ENCODE measurements at regions of chr7 and their contacts with region 1.

Region 1: GRCh38 chr7:97117372-97118188 is at the start of gene SDHAF3:
- DNase-seq: peak; percentile 96
- ATAC-seq: peak; percentile 87
- H3K4me3 Mint-ChIP-seq: peak within 1 kb of the TSS; percentile 95
- H3K27ac Mint-ChIP-seq: peak within 1 kb of the TSS; percentile 96
- H3K4me1 Mint-ChIP-seq: peaks cover 41% of the 10 kb centered on the region
- H3K27me3 Mint-ChIP-seq: no peaks in the 10 kb centered on the region
- CTCF ChIP-seq: no peak
- total RNA-seq, gene SDHAF3: 20.6 and 24.2 TPM in 2 replicates

Region 2: DNA sequence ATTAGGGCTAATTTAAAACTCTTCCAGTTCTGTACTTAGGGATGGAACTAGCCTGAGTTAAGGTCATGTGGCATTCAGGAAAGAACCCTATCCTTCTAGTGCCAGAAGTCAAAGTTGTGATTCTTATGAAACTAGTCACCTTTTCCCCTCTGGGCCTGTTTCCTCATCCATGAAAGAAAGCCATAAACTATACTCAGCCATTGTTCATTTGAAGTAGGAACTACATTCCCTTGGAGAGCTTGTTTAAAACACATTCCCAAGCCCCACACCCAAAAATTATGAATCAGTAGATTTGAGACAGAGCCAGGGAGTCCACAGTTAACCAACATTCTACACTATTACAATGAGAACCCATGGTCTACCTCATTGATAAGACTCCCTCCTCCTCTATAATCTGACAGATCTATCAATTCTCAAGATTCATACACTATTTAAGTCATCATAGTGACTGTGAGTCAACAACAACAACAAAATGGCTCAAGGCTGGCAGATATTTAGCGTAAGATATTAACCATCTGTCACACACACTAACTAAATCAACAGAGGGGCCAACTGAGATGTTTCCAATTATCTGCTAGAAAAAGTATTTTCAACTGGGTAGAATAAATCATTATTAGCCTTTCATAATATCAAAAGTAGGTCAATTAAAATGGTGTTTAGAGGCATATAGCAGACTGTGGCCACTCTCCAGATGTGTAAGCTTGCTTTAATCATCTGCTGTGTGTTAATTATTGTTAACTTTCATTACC is 898.0 kb before region 1 on chr7:
- CTCF ChIA-PET with region 1: no interaction called
- POLR2A ChIA-PET with region 1: no interaction called
- intact Hi-C with region 1: no loop called
- DNase-seq: no peak
- ATAC-seq: no peak
- H3K4me3 Mint-ChIP-seq: no peak overlapping the region
- H3K27ac Mint-ChIP-seq: no peak overlapping the region
- H3K4me1 Mint-ChIP-seq: no peaks in the 10 kb centered on the region
- H3K27me3 Mint-ChIP-seq: no peaks in the 10 kb centered on the region
- CTCF ChIP-seq: no peak

Region 3: DNA sequence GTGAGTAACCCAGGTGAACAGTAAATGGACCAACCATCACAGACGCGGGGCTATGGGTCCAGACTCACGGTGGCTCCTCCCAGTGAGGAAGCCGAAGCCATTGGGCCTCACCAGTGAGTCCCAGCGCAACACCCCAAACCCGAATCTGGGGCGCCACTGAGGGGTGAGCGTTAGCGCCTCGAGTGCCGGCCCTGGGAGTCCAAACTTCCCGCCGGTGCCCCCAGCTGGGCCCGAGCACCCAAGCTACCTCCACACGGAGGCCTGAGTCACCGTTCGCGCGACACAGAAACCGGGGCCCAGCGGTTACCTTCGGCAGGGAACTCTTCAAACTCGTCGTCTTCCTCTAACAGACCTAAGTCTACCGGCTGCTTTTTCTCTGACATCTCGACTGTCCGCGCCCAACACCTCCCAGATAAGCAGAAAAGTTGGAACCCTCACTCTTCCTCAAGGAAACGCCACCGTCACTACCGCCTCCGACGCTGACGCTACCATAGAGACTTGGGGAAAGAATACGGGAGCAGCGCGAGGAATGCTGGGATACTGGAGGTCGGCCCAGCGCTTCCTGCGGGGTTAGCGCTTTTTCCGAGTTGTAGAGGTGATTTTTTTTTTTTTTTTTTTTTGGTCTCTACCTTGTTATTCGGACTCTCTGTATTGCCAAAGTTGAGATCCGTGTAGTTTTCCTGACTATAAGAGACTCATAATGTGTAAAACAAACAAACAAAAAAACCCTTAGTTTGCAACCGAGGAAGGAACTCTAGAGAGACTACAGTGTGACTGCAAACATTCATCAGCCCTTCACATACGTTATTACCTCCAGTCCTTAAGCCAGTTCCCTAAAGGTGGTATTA is 408.0 kb before region 1 on chr7 and contains the start of gene SEM1:
- CTCF ChIA-PET with region 1: no interaction called
- POLR2A ChIA-PET with region 1: interaction called, 3 read pairs
- intact Hi-C with region 1: loop called (anchors 1 kb)
- DNase-seq: peak; percentile 53
- ATAC-seq: peak; percentile 89
- H3K4me3 Mint-ChIP-seq: peak within 1 kb of the TSS; percentile 100
- H3K27ac Mint-ChIP-seq: peak within 1 kb of the TSS; percentile 98
- H3K4me1 Mint-ChIP-seq: peaks cover 40% of the 10 kb centered on the region
- H3K27me3 Mint-ChIP-seq: peaks cover 3% of the 10 kb centered on the region
- CTCF ChIP-seq: no peak
- total RNA-seq, gene SEM1: 32.3 and 35.5 TPM in 2 replicates

Region 4: DNA sequence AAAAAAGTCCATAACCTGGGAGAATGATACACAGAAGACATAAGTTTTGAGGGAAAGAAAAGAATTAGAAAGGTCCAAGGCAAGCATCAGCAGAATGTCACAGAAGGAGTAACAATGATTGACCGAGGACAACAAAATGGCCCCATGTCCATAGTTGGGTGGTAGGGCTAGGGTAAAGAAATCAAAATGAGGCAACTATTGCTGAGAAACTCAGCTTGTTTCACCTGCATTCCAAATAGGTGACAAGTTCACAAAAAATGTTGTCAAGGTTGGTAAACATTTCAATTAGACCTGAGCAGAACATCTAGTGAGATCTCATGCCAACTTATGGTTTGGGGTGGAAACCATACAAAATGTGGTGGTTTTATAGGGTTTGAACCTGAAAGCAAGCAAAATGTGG is 135.0 kb before region 1 on chr7:
- CTCF ChIA-PET with region 1: no interaction called
- POLR2A ChIA-PET with region 1: no interaction called
- intact Hi-C with region 1: no loop called
- DNase-seq: no peak
- ATAC-seq: no peak
- H3K4me3 Mint-ChIP-seq: no peak overlapping the region
- H3K27ac Mint-ChIP-seq: no peak overlapping the region
- H3K4me1 Mint-ChIP-seq: no peaks in the 10 kb centered on the region
- H3K27me3 Mint-ChIP-seq: peaks cover 21% of the 10 kb centered on the region
- CTCF ChIP-seq: no peak

Region 5: DNA sequence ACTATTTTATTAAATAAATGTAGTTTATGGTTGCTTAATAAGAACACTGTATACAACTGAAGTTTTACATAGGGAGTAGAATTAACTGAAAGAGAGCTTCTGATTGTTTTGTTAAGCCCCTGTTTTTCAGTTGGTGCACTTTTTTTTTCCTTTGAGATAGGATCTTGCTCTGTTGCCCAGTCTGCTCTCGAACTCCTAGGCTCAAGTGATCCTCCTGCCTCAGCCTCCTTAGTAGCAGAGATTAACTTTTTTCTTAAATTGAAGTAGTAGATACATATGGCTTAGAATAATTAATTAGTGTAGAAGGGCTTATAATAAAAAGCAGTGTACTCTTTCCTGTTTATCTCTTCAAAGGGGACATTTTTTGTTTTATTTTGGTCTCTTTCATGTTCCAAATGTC is 11.2 kb after region 1 on chr7:
- CTCF ChIA-PET with region 1: no interaction called
- POLR2A ChIA-PET with region 1: no interaction called
- intact Hi-C with region 1: no loop called
- DNase-seq: no peak
- ATAC-seq: no peak
- H3K4me3 Mint-ChIP-seq: no peak overlapping the region
- H3K27ac Mint-ChIP-seq: no peak overlapping the region
- H3K4me1 Mint-ChIP-seq: peaks cover 16% of the 10 kb centered on the region
- H3K27me3 Mint-ChIP-seq: no peaks in the 10 kb centered on the region
- CTCF ChIP-seq: no peak

Region 6: GRCh38 chr7:97179454-97180104 is 62.0 kb after region 1 on chr7:
- CTCF ChIA-PET with region 1: interaction called, 4 read pairs
- POLR2A ChIA-PET with region 1: interaction called, 4 read pairs
- intact Hi-C with region 1: loop called (anchors 1 kb)
- DNase-seq: no peak
- ATAC-seq: peak; percentile 79
- H3K4me3 Mint-ChIP-seq: no peak overlapping the region
- H3K27ac Mint-ChIP-seq: no peak overlapping the region
- H3K4me1 Mint-ChIP-seq: peaks cover 6% of the 10 kb centered on the region
- H3K27me3 Mint-ChIP-seq: no peaks in the 10 kb centered on the region
- CTCF ChIP-seq: peak; percentile 63

Region 7: GRCh38 chr7:97971990-97972943 is 854.7 kb after region 1 on chr7:
- CTCF ChIA-PET with region 1: no interaction called
- POLR2A ChIA-PET with region 1: interaction called, 4 read pairs
- intact Hi-C with region 1: loop called (anchors 1 kb)
- DNase-seq: peak; percentile 75
- ATAC-seq: peak; percentile 92
- H3K4me3 Mint-ChIP-seq: peak overlapping the region; percentile 92
- H3K27ac Mint-ChIP-seq: peak overlapping the region; percentile 91
- H3K4me1 Mint-ChIP-seq: peaks cover 22% of the 10 kb centered on the region
- H3K27me3 Mint-ChIP-seq: peaks cover 2% of the 10 kb centered on the region
- CTCF ChIP-seq: no peak

Region 8: GRCh38 chr7:98400542-98401340 is 1283.2 kb after region 1 on chr7 and contains the start of gene BAIAP2L1:
- CTCF ChIA-PET with region 1: no interaction called
- POLR2A ChIA-PET with region 1: no interaction called
- intact Hi-C with region 1: loop called (anchors 5 kb)
- DNase-seq: peak; percentile 87
- ATAC-seq: peak; percentile 92
- H3K4me3 Mint-ChIP-seq: peak within 1 kb of the TSS; percentile 76
- H3K27ac Mint-ChIP-seq: peak within 1 kb of the TSS; percentile 35
- H3K4me1 Mint-ChIP-seq: peaks cover 27% of the 10 kb centered on the region
- H3K27me3 Mint-ChIP-seq: peaks cover 26% of the 10 kb centered on the region
- CTCF ChIP-seq: no peak
- total RNA-seq, gene BAIAP2L1: 8.1 and 10.4 TPM in 2 replicates